ENCODE measurements at regions of chr13 and their contacts with region 1.

Region 1: DNA sequence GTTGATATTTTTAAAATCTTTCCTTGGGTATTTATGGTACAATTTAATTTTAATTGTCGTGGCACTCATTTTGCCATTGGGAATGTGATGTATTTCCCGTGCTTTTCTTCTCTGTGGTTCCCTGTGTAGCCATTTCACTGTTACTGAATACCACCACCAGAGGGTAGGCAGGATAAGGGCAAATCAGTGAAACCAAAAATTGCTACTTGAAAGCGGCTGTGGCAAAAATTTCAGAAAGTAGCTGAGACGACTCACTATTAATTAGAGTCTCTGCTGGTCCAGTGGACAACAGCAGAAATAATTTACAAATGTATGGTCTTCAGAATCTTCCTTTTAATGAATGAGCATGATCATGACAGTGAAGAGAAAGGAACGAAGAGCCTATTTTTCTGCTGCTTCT is 34.4 kb upstream of the MIR17HG start:
- DNase-seq: peak; percentile 53 to 75 (median 70)
- H3K4me3 ChIP-seq: peak overlapping the region in 4 of 7 experiments; percentile 38 to 63 (median 52)
- H3K27ac ChIP-seq: no peak overlapping the region
- H3K4me1 ChIP-seq: peaks cover 0 to 12% (median 4%) of the 10 kb centered on the region in 4 experiments
- H3K27me3 ChIP-seq: peaks cover 0 to 18% (median 0%) of the 10 kb centered on the region in 5 experiments

Region 2: GRCh38 chr13:91323349-91323748 is 10.2 kb after region 1 on chr13:
- CTCF ChIA-PET with region 1: interaction called, 20 read pairs
- POLR2A ChIA-PET with region 1: no interaction called
- DNase-seq: no peak
- H3K4me3 ChIP-seq: no peak overlapping the region
- H3K27ac ChIP-seq: no peak overlapping the region
- H3K4me1 ChIP-seq: no peaks in the 10 kb centered on the region
- H3K27me3 ChIP-seq: no peaks in the 10 kb centered on the region

Region 3: DNA sequence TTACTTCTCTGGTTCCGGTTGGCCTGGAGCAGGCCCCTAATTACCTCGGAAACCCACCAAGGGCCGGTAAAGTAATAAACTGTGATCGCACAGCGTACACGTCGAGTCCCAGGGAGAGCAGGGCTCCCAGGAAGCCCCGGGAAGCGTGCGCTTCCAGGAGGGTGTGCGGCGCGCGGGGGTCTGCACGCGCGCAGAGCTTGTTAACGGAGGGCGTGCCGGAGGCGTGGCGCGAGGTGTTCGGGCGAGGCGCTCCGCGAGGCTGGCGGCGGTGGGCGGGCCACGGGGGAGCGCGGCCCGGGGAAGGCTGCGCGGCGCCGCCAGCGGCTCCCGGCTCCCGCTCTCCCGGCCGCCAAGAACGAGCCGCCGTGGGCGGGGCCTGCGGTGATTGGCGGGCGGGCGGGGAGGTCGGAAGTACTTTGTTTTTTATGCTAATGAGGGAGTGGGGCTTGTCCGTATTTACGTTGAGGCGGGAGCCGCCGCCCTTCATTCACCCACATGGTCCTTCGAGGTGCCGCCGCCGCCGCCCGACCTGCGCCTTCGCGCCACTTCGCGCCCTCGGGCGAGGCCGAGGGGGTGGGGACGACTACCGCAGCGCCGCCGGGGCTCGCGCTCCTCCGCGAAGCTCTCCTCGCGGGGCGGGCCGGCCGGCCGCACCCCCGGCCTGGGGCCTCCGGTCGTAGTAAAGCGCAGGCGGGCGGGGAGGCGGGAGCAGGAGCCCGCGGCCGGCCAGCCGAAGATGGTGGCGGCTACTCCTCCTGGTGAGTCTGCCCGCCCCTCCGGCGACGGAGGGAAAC is 34.3 kb after region 1 on chr13 and contains the start of gene MIR17HG:
- CTCF ChIA-PET with region 1: interaction called, 12 read pairs
- POLR2A ChIA-PET with region 1: no interaction called
- DNase-seq: peak; percentile 90 to 94 (median 93)
- H3K4me3 ChIP-seq: peak within 1 kb of the TSS; percentile 81 to 93 (median 86)
- H3K27ac ChIP-seq: peak within 1 kb of the TSS; percentile 64 to 92
- H3K4me1 ChIP-seq: peaks cover 23 to 47% (median 34%) of the 10 kb centered on the region in 4 experiments
- H3K27me3 ChIP-seq: no peaks in the 10 kb centered on the region

Region 4: GRCh38 chr13:91398413-91399272 is 85.5 kb after region 1 on chr13 and contains the start of gene GPC5:
- CTCF ChIA-PET with region 1: no interaction called
- POLR2A ChIA-PET with region 1: no interaction called
- DNase-seq: peak; percentile 69 to 87 (median 84)
- H3K4me3 ChIP-seq: peak within 1 kb of the TSS; percentile 64 to 88 (median 77)
- H3K27ac ChIP-seq: no peak within 1 kb of the TSS
- H3K4me1 ChIP-seq: peaks cover 4 to 31% (median 18%) of the 10 kb centered on the region in 4 experiments
- H3K27me3 ChIP-seq: peaks cover 0 to 20% (median 5%) of the 10 kb centered on the region in 5 experiments

Region 5: DNA sequence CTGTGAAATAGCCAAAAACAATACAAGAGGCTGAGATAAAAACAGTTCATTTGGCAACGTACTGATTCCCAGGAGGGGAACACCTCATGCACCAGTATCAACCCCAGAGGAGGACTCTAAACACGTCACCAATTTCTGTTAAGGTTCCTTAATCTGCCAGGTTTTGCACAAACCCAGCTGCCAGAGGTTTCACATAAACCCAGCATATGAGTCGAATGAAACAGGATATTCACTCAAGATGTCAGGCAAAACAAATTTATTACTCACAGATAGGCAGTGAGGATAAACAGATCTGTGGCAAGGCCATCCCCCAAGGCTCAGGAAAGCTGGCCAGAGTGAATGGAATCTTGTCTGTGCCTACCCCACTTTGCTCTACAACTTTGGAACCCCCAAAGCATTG is 296.2 kb after region 1 on chr13:
- CTCF ChIA-PET with region 1: no interaction called
- POLR2A ChIA-PET with region 1: no interaction called
- DNase-seq: no peak
- H3K4me3 ChIP-seq: no peak overlapping the region
- H3K27ac ChIP-seq: no peak overlapping the region
- H3K4me1 ChIP-seq: no peaks in the 10 kb centered on the region
- H3K27me3 ChIP-seq: no peaks in the 10 kb centered on the region

Measured in common myeloid progenitor, CD34-positive (primary cell).